ENCODE measurements at regions of chr2 and their contacts with region 1.

Region 1: DNA sequence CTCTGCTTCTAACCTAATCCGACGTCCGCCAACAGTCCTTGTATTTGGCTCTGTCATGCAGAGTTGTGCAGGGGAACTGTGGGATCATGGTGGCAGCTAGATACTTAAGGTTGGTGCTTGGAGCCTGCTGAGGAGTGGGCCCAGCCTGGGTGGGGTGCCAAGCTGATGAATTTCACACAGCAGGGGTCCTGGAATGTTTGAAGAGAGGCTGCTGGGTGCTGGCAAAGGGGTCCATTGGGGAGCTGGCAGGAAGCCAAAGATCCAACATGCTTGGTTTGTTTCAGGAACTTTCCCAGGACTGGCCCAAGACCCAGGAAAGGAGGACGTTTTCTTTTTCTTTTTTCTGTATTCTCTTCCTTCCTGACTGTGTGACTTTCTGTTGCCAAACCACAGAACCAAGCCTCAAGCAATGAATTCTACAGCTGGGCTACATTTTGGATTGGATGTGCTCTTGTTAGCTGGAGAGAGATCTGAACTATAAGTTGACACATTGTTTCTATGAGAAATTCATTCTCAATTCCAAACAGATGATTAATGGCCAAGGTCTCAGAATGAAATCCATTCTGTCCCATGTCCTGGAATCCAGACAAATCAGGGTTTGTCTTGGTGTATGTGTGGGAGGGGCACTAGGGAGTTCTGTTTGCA is 49.9 kb downstream of the DHRS9 start:
- DNase-seq: no peak
- H3K4me3 ChIP-seq: no peak overlapping the region
- H3K27ac ChIP-seq: no peak overlapping the region
- H3K4me1 ChIP-seq: peaks cover 0 to 3% (median 0%) of the 10 kb centered on the region in 4 experiments; a peak in 1 of 7 replicates
- H3K27me3 ChIP-seq: no peaks in the 10 kb centered on the region
- CTCF ChIP-seq: no peak
- EP300 ChIP-seq: no peak
- POLR2A ChIP-seq: no peak
- RAD21 ChIP-seq: no peak

Region 2: GRCh38 chr2:169131587-169132512 is 12.6 kb after region 1 on chr2:
- CTCF ChIA-PET with region 1: interaction called, 22 read pairs
- POLR2A ChIA-PET with region 1: no interaction called
- DNase-seq: no peak
- H3K4me3 ChIP-seq: no peak overlapping the region
- H3K27ac ChIP-seq: no peak overlapping the region
- H3K4me1 ChIP-seq: no peaks in the 10 kb centered on the region
- H3K27me3 ChIP-seq: no peaks in the 10 kb centered on the region
- CTCF ChIP-seq: peak in 2 of 3 experiments; percentile 39 to 71; a peak in 2 of 4 replicates
- EP300 ChIP-seq: no peak
- POLR2A ChIP-seq: no peak
- RAD21 ChIP-seq: peak; percentile 34 to 44

Region 3: DNA sequence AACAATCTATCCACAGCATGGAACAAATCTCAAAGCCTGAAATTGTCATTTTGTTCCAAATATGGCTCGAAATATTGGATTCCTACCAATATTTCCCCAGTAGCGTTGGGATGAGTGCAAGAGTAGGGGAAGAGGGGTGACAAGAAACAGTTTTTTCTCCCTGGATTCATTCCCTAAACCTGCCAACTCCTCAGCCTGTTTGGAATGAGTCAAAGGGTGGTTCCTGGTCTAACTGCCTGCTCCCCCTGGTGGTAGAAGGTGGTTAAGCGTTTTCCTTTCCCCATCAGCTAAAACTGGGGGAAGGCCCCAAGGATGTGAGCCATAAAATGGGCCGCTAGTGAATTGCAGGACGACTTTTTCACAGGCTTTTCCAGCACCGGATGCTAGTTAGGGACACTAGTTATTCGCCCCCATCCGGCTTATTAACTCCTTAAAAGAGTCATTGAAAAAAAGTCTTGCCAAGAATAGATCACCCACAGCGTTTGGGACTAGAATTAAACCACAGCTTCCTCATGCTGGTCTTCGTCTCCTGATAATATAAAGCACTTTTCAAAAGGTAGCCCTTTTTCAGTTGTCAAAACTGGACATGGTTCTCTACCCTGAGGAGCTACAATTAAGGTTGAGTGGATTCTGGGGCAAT is 22.6 kb after region 1 on chr2:
- CTCF ChIA-PET with region 1: interaction called, 11 read pairs
- POLR2A ChIA-PET with region 1: no interaction called
- DNase-seq: peak; percentile 31 to 90
- H3K4me3 ChIP-seq: no peak overlapping the region
- H3K27ac ChIP-seq: no peak overlapping the region
- H3K4me1 ChIP-seq: peaks cover 0 to 10% (median 7%) of the 10 kb centered on the region in 4 experiments; a peak in 5 of 7 replicates
- H3K27me3 ChIP-seq: no peaks in the 10 kb centered on the region
- CTCF ChIP-seq: peak; percentile 75 to 94 (median 76)
- EP300 ChIP-seq: no peak
- POLR2A ChIP-seq: no peak
- RAD21 ChIP-seq: peak; percentile 55 to 70

Region 4: DNA sequence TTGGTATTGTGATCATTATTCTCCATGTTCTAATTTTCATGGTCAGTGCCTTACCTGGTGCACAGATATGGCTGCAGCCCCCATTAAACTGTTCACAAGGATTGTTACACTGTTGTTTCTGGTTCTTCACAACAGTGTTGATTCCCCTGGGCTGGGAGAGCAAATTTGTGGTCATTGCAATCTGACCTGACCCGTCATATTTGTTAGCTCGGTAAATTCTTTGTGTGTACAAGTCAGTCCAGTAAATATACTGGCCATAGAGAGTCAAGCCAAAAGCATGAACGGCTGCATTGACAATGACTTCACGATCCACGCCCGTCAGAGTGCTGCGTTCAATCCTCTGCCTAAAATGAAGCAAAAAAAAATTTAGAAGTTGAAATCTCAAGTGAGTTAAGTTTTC is 84.7 kb after region 1 on chr2:
- CTCF ChIA-PET with region 1: no interaction called
- POLR2A ChIA-PET with region 1: no interaction called
- DNase-seq: no peak
- H3K4me3 ChIP-seq: no peak overlapping the region
- H3K27ac ChIP-seq: no peak overlapping the region
- H3K4me1 ChIP-seq: no peaks in the 10 kb centered on the region
- H3K27me3 ChIP-seq: no peaks in the 10 kb centered on the region
- CTCF ChIP-seq: no peak
- EP300 ChIP-seq: no peak
- POLR2A ChIP-seq: no peak
- RAD21 ChIP-seq: no peak

Region 5: GRCh38 chr2:169285531-169286235 is 166.4 kb after region 1 on chr2:
- CTCF ChIA-PET with region 1: no interaction called
- POLR2A ChIA-PET with region 1: no interaction called
- DNase-seq: no peak
- H3K4me3 ChIP-seq: no peak overlapping the region
- H3K27ac ChIP-seq: no peak overlapping the region
- H3K4me1 ChIP-seq: peaks cover 0 to 9% (median under 1%) of the 10 kb centered on the region in 4 experiments; a peak in 4 of 7 replicates
- H3K27me3 ChIP-seq: no peaks in the 10 kb centered on the region
- CTCF ChIP-seq: no peak
- EP300 ChIP-seq: no peak
- POLR2A ChIP-seq: no peak
- RAD21 ChIP-seq: no peak